Calu3 (cell line): ENCODE measurements at regions of chr3 and their contacts with region 1.

Region 1: DNA sequence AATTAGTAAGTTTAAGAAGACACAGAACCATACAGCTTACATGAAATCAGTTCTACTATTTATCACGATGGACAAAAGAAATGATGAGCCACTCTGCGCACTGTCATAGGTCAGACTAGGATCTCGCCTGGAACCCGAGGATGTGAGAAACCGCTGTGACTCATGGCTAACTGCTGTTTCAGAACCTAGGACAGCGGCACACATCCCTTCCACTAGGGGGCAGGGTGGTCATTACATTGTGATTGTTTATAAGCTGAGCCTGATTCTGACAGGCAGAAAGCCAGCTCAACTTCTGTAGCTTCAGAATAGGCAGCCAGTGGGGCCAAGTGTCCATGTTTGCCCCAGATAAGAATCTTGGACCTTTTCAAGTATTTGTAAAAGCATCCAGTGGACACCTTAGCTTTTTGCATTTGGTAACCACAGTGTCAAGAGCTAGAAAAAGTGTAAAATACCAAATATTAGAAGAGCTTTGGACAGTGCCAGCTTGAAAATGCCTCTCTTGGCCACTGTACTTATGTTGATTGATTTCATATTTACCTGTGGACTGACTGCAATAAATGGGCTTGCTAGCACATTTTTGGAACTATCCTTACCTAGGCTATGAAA is 115.8 kb downstream of the KBTBD8 start:
- DNase-seq: peak; percentile 81
- H3K4me3 Mint-ChIP-seq: no peak overlapping the region
- H3K27ac Mint-ChIP-seq: no peak overlapping the region
- H3K4me1 Mint-ChIP-seq: no peaks in the 10 kb centered on the region
- H3K27me3 Mint-ChIP-seq: no peaks in the 10 kb centered on the region
- CTCF ChIP-seq: peak; percentile 78

Region 2: GRCh38 chr3:66971891-66972551 is 141.9 kb before region 1 on chr3:
- CTCF ChIA-PET with region 1: interaction called, 5 read pairs
- intact Hi-C with region 1: loop called (anchors 2 kb)
- DNase-seq: peak; percentile 71
- H3K4me3 Mint-ChIP-seq: peak overlapping the region; percentile 60
- H3K27ac Mint-ChIP-seq: no peak overlapping the region
- H3K4me1 Mint-ChIP-seq: no peaks in the 10 kb centered on the region
- H3K27me3 Mint-ChIP-seq: peaks cover 17% of the 10 kb centered on the region
- CTCF ChIP-seq: peak; percentile 47

Region 3: GRCh38 chr3:67790043-67790442 is 676.1 kb after region 1 on chr3:
- CTCF ChIA-PET with region 1: interaction called, 3 read pairs
- intact Hi-C with region 1: loop called (anchors 5 kb)
- DNase-seq: peak; percentile 55
- H3K4me3 Mint-ChIP-seq: no peak overlapping the region
- H3K27ac Mint-ChIP-seq: no peak overlapping the region
- H3K4me1 Mint-ChIP-seq: no peaks in the 10 kb centered on the region
- H3K27me3 Mint-ChIP-seq: no peaks in the 10 kb centered on the region
- CTCF ChIP-seq: peak; percentile 17

Region 4: DNA sequence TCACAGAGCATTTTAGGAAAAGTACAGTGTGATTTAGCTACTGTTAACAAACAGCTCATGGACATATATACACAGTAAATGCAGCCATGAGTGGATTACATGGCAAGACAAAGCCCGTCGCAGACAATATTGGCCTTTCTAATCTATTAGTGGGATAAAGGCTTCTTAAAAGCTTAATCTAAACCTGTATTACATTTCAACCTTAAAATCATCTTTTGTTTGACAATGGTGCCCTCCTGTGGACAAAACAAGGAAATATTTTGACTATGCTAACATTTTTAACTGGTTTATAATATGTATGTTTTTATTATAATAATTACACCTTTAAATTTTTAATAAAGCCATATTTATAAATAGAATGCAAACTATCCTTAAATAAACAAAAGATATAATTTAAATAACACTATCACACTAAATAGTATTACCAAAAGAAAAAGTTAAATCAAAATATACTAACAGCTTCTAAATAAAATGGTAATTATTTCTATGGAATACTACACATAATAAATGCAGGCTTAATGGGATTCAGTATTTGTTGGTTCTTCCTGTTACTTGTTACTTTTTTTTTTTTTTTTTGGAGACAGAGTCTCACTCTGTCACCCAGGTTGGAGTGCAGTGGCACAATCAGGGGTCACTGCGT is 1779.8 kb after region 1 on chr3:
- CTCF ChIA-PET with region 1: interaction called, 16 read pairs
- intact Hi-C with region 1: loop called (anchors 5 kb)
- DNase-seq: peak; percentile 11
- H3K4me3 Mint-ChIP-seq: no peak overlapping the region
- H3K27ac Mint-ChIP-seq: no peak overlapping the region
- H3K4me1 Mint-ChIP-seq: no peaks in the 10 kb centered on the region
- H3K27me3 Mint-ChIP-seq: peaks cover 42% of the 10 kb centered on the region
- CTCF ChIP-seq: peak; percentile 24